HEK293 (cell line): ENCODE measurements at regions of chr11 and their contacts with region 1.

Region 1: DNA sequence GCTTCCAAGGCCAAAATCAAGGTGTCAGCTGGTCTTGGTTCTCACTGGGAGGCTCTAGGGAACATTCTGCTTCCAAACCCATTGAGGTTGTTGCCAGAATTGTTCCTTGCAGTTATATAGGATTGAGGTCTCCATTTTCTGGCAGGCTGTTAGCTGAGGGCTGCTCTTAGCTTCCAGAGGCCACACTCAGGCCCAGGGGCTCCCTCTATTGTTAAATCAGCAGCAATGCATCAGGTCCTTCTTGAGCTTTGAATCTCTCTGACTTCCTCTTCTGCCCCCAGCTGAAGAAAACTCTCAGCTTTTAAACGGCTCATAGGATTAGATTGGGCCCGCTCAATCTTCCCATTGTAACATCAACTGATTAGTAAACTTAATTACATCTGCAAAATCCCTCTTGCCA is 39.3 kb upstream of the BSX start:
- H3K4me3 ChIP-seq: no peak overlapping the region
- H3K27ac ChIP-seq: no peak overlapping the region
- H3K4me1 ChIP-seq: no peaks in the 10 kb centered on the region
- CTCF ChIP-seq: no peak

Region 2: DNA sequence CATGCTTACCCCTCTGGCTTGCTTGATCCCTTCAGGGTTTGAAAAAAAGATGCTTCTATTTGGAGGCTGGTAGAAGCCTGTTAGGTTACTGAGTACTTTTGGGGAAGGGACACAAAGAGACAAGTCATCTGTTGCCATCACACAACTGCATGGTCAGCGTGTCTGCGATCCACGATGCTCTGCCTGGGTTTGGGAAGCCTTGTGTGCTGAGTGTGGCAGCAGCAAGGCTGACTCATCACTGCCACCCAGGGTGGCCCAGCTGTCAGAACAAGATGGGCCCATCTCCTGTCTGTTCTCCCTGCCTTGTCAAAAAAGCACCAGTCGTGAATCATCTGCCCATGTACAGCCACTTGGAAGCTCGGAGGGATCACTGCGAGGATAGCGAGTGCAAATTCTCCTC is 339.2 kb before region 1 on chr11:
- CTCF ChIA-PET with region 1: no interaction called
- POLR2A ChIA-PET with region 1: no interaction called
- H3K4me3 ChIP-seq: no peak overlapping the region
- H3K27ac ChIP-seq: no peak overlapping the region
- H3K4me1 ChIP-seq: no peaks in the 10 kb centered on the region
- CTCF ChIP-seq: no peak

Region 3: DNA sequence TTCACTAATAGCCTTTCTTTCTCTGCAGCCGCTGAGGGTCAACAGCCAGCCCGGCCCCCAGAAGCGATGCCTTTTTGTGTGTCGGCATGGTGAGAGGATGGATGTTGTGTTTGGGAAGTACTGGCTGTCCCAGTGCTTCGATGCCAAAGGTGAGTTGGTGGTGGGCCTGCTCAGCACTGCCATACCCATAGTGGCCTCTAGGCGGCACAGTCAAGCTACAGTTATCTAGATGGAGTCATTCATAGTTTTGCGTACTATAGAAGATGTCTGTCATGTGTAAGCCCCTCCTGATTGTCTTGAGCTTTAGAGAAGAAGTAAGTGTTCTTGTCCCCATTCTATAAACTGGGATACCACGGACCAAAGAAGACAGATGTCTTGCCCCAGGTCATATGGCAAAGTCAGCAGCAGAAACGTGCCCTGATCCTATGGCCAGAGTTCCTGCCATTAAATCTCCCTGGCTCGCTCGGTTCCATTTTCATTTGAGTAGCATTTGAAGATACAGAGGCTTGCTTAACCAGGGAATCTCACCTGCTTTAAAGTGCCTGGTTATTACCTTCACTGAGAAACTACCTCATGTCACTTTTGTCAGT is 224.7 kb before region 1 on chr11:
- CTCF ChIA-PET with region 1: interaction called, 19 read pairs
- POLR2A ChIA-PET with region 1: no interaction called
- H3K4me3 ChIP-seq: no peak overlapping the region
- H3K27ac ChIP-seq: no peak overlapping the region
- H3K4me1 ChIP-seq: no peaks in the 10 kb centered on the region
- CTCF ChIP-seq: no peak

Region 4: DNA sequence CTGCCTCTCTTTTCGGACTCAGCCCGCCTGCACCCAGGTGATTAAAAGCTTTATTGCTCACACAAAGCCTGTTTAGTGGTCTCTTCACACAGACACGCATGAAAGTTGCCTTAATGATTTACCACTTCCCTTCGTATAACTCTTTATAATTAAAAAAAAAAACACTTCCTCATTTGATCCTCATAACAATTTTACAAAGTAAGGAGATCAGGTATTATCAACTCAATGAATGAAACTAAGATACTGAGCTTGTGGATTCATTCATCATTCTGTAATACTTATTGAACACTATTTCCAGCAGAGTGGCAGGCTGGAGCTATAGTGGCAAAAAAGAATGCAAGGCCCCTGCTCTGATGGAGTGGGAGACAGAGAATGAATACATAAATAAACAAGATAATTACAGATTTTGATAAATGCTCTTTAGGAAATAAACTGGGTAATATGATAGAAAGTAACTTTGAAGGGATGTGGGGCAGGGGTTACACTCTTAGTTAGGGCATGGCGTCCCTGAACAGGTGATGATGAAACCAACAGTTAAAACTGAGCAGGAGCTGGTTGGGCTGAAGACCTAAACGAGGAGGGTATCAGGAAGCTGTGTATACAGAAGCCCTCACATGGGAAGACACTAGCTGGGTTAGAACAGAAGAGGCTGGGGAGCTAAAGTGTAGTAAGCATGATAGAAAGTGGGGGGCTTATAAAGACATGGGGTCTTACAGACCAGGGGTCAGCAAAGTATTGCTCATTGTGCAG is 188.1 kb before region 1 on chr11:
- CTCF ChIA-PET with region 1: no interaction called
- POLR2A ChIA-PET with region 1: no interaction called
- H3K4me3 ChIP-seq: no peak overlapping the region
- H3K27ac ChIP-seq: no peak overlapping the region
- H3K4me1 ChIP-seq: no peaks in the 10 kb centered on the region
- CTCF ChIP-seq: no peak

Region 5: GRCh38 chr11:122863704-122864326 is 157.2 kb before region 1 on chr11:
- CTCF ChIA-PET with region 1: interaction called, 273 read pairs
- POLR2A ChIA-PET with region 1: no interaction called
- H3K4me3 ChIP-seq: no peak overlapping the region
- H3K27ac ChIP-seq: no peak overlapping the region
- H3K4me1 ChIP-seq: no peaks in the 10 kb centered on the region
- CTCF ChIP-seq: no peak

Region 6: DNA sequence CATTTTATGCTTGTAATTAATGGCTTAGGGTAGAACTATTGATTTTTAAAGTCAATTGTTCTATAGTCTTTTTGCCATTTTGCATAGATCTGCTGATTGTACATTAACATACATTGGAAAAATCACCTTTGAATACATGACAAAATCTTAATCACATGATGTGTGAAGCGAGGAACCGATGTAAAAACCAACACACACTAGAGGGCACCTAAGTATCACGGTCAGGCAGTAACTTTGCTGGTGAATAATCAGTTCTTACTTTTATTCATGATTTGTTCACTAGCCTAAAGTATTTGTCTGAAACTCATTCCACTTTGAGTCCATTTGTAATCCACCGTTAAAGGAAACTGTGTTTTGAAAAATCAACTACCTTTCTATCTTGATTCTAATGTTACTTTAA is 110.2 kb before region 1 on chr11:
- CTCF ChIA-PET with region 1: interaction called, 10 read pairs
- POLR2A ChIA-PET with region 1: no interaction called
- H3K4me3 ChIP-seq: no peak overlapping the region
- H3K27ac ChIP-seq: no peak overlapping the region
- H3K4me1 ChIP-seq: no peaks in the 10 kb centered on the region
- CTCF ChIP-seq: no peak

Region 7: DNA sequence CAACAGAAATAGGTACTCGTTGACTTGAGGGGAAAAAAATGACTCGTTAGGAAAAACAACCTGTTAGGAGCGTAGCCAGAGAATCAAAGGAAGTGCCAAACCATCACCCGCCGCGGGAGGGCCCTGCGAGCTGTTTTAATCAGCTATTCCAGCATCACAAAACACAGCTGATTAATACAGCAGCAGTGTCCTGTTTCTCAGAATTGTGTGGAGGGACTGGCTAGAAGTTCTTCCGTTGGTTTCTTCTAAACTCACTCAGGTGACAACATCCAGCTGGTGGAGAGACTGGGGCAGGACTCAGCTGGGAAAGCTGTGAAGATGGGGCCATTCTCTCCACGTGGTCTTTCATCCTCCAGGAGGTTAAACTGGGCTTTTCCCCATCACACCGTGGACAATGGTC is 12.9 kb after region 1 on chr11:
- CTCF ChIA-PET with region 1: interaction called, 37 read pairs
- POLR2A ChIA-PET with region 1: no interaction called
- H3K4me3 ChIP-seq: no peak overlapping the region
- H3K27ac ChIP-seq: no peak overlapping the region
- H3K4me1 ChIP-seq: no peaks in the 10 kb centered on the region
- CTCF ChIP-seq: no peak

Region 8: DNA sequence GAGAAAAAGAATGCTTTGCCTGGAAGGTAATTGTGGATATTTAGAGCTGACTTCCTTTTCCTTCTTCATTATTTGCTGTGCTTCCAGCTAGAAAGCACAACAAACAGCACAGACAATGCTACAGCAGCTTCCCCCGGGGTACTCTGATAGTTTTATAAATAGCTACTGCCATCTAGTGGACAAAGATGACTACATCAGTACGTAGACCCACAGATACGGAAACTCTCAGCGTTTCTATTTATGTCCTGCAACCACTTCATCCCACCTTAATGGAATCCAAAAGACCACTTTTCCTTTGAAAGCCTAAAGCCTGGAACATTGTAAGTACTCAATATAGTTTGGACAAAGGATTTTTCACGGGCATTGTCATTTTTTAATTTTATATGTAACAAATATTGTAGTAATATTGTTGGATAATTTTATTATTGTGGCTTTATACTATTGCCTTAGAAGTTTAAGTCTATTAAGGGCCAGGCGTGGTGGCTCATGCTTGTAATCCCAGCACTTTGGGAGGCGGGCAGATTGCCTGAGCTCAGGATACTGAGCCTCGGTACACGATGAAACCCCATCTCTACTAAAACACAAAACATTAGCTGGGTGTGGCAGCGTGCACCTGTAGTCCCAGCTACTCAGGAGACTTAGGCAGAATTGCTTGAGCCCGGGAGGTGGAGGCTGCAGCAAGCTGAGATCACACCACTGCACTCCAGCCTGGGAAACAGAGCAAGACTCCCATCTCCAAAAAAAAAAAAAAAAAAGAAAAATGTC is 33.5 kb after region 1 on chr11:
- CTCF ChIA-PET with region 1: interaction called, 54 read pairs
- POLR2A ChIA-PET with region 1: interaction called, 6 read pairs
- H3K4me3 ChIP-seq: no peak overlapping the region
- H3K27ac ChIP-seq: no peak overlapping the region
- H3K4me1 ChIP-seq: no peaks in the 10 kb centered on the region
- CTCF ChIP-seq: peak; percentile 19; the same call in 1 of the 2 replicates